Naive thymus-derived CD8-positive, alpha-beta T cell (primary cell): ENCODE measurements at regions of chr1 and their contacts with region 1.

Region 1: DNA sequence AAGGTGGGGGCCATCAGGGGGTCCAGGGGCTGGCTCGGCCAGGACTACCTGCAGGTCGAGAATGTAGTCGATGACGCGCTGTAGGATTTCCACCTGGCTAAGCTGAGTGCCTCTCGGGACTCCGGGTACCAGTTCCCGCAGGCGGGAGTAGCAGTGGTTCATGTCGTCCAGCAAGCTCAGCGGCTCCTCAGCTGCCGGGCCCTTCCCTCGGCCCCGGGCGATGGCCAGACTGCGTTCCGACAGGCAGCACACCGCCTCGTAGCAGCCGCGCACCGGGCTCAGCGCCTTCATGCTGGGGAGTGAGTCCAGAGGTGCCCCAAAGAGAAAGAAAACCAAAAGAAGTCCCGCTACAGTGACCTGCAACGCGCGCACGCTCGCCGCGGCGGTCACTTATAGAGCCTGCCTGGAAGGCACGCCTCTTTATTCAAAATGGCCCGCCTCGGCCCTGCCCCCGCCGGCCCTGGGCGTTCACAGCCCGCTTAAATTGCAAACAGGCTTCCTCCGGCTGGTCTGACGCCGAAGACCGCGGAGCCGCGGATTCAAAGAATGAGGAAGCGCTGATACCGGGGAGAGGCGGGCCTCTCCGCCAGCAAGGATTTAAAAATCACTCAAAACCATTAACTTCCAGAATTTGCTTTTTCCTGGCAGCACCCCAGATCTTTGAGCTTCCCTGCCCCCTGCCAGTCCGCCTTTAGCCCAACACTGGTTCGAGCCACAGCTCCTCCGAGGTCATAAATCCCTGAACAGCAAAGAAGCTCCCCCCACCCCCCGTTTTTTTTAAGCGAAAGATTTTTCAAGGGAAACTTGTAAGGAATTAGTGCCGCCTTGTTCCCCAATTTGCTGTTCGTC is at the start of gene ID3:
- DNase-seq: peak; percentile 79 to 93 (median 86)
- ATAC-seq: peak; percentile 52 to 61
- H3K4me3 Mint-ChIP-seq: peak within 1 kb of the TSS; percentile 85 to 97 (median 94)
- H3K27ac Mint-ChIP-seq: peak within 1 kb of the TSS; percentile 81 to 97 (median 95)
- H3K4me1 Mint-ChIP-seq: peaks cover 45 to 80% (median 69%) of the 10 kb centered on the region in 4 donors
- H3K27me3 Mint-ChIP-seq: no peaks in the 10 kb centered on the region
- polyA plus RNA-seq, gene ID3: 2.7 to 10.0 (median 4.6) TPM

Region 2: DNA sequence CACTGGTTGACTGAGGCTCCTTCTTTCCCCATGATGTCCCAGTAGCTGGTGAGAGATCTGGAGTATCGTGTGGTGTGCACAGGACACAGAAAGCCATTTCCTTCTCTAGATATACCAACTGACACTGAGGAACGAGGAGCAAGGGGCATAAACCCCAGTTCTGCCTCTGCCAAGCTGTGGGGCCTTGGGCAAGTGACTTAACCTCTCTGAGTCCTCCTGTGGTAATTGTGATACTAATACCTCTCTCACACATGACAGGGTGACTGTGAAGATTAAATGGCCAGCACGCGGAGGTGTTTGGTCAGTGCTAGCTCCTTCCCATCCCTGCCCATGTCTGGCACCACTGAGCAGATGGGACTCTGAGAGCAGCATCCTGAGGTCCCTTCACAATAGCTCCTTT is 108.5 kb before region 1 on chr1:
- POLR2A ChIA-PET with region 1: interaction called, 10 read pairs
- DNase-seq: no peak
- ATAC-seq: no peak
- H3K4me3 Mint-ChIP-seq: no peak overlapping the region
- H3K27ac Mint-ChIP-seq: no peak overlapping the region
- H3K4me1 Mint-ChIP-seq: peaks cover 14 to 20% (median 15%) of the 10 kb centered on the region in 4 donors
- H3K27me3 Mint-ChIP-seq: peaks cover 0 to 8% (median 7%) of the 10 kb centered on the region in 5 donors

Region 3: DNA sequence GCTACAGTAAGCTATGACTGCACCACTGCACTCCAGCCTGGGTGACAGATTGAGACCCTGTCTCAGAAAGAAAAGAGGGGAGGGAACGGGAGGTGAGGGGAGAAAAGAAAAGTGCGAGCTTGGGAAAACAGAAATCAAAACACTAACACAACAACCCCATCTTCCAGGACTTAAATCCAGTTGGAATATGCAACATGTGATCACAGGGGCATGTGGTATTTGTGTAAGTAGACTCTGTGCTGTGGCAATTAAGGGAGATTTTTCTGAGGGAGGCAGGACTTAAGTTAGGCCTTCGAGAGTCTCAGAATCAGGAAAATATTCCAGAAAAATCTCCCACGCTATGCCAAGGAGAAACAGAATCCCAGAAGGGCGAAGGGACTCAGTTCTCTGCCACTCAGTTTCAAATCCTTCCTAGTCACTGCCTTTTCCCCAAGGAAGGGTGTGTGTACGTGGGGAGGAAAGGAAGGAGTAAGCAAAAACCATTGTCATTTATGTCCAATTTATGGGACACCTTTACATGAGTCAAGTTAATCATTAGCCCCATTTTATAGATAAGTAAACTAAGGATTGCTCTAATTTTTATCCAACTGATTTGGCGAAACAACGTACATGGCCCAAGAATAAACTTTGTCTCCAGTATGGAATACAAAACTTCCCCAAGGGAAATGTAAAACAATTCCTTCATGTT is 12.3 kb before region 1 on chr1:
- POLR2A ChIA-PET with region 1: interaction called, 41 read pairs
- DNase-seq: peak in 1 of 10 donors; percentile 4
- ATAC-seq: no peak
- H3K4me3 Mint-ChIP-seq: no peak overlapping the region
- H3K27ac Mint-ChIP-seq: peak overlapping the region in 2 of 10 donors; percentile 20 to 33
- H3K4me1 Mint-ChIP-seq: peaks cover 8 to 29% (median 19%) of the 10 kb centered on the region in 4 donors
- H3K27me3 Mint-ChIP-seq: no peaks in the 10 kb centered on the region

Region 4: GRCh38 chr1:23591460-23592208 is 32.3 kb after region 1 on chr1:
- POLR2A ChIA-PET with region 1: interaction called, 27 read pairs
- DNase-seq: peak in 2 of 10 donors; percentile 49 to 79
- ATAC-seq: peak; percentile 43 to 60
- H3K4me3 Mint-ChIP-seq: peak overlapping the region; percentile 6 to 70 (median 58)
- H3K27ac Mint-ChIP-seq: peak overlapping the region; percentile 67 to 95 (median 84)
- H3K4me1 Mint-ChIP-seq: peaks cover 38 to 84% (median 71%) of the 10 kb centered on the region in 4 donors
- H3K27me3 Mint-ChIP-seq: no peaks in the 10 kb centered on the region

Region 5: GRCh38 chr1:23613191-23614031 is 54.1 kb after region 1 on chr1:
- POLR2A ChIA-PET with region 1: interaction called, 359 read pairs
- DNase-seq: peak in 6 of 10 donors; percentile 24 to 76 (median 50)
- ATAC-seq: peak; percentile 59 to 62
- H3K4me3 Mint-ChIP-seq: peak overlapping the region; percentile 43 to 81 (median 64)
- H3K27ac Mint-ChIP-seq: peak overlapping the region; percentile 86 to 100 (median 94)
- H3K4me1 Mint-ChIP-seq: peaks cover 51 to 92% (median 83%) of the 10 kb centered on the region in 4 donors
- H3K27me3 Mint-ChIP-seq: peaks cover 0 to 2% (median 0%) of the 10 kb centered on the region in 5 donors